Posterior cingulate gyrus (tissue), 11 donors: ENCODE measurements at regions of chr10 and their contacts with region 1.

Region 1: GRCh38 chr10:24518981-24519597 is 204.6 kb downstream of the ARHGAP21 start:
- DNase-seq: peak in 9 of 10 donors; percentile 39 to 92 (median 69)

Region 2: DNA sequence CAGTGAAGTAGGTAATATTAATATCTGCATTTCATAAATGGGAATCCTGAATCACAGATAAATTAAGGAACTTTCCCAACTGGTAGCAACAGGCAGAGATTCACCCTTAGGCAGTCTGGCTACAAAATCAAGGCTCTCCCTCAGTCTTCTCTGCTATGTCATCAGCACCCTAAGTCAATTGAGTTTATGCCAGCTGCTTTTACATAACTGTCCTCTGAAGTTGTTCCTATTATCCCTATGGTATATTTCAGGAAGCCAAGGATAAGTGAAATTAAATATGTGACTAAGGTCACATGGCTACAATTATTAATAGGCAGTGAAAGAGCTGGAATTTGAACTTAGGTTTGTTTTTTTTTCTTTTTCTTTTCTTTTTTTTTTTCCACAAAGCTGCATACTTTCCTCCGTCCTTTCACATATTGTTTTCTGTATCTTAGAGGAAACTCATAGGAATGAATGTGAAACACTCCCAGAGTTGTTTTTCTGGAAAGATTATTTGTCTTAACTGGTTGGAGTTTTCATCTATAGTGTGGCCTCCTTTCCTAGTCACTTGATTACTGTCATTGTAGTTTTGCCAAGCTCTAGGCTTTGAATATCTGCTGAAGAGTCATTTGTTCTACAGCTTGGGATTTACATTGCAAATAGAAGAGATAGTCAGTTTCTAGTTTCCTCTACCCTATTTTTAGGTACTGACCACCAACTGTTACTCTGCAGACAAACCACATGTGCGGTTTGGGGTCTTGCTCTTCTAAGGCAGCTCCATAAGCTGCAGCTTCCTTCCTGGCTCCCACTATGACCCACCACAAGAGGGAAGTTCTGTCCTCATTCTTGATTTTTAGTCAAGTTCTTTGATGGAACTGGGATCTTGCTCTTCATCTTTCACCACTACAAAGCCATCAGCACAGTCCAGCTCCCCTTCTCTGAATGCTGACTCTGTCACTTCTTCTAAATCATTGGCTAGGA is 648.2 kb before region 1 on chr10:
- intact Hi-C with region 1: no loop called
- DNase-seq: no peak

Region 3: GRCh38 chr10:23945845-23946244 is 573.2 kb before region 1 on chr10:
- intact Hi-C with region 1: no loop called
- DNase-seq: no peak

Region 4: GRCh38 chr10:23994479-23995046 is 524.5 kb before region 1 on chr10:
- intact Hi-C with region 1: loop called (anchors 2 kb)
- DNase-seq: peak in 5 of 10 donors; percentile 18 to 63 (median 50)

Region 5: GRCh38 chr10:24209946-24210491 is 309.1 kb before region 1 on chr10:
- intact Hi-C with region 1: loop called (anchors 5 kb)
- DNase-seq: no peak

Region 6: GRCh38 chr10:24432472-24433416 is 86.3 kb before region 1 on chr10:
- intact Hi-C with region 1: no loop called
- DNase-seq: no peak